Ovary (tissue), 10 donors: ENCODE measurements at regions of chr2 and their contacts with region 1.

Region 1: DNA sequence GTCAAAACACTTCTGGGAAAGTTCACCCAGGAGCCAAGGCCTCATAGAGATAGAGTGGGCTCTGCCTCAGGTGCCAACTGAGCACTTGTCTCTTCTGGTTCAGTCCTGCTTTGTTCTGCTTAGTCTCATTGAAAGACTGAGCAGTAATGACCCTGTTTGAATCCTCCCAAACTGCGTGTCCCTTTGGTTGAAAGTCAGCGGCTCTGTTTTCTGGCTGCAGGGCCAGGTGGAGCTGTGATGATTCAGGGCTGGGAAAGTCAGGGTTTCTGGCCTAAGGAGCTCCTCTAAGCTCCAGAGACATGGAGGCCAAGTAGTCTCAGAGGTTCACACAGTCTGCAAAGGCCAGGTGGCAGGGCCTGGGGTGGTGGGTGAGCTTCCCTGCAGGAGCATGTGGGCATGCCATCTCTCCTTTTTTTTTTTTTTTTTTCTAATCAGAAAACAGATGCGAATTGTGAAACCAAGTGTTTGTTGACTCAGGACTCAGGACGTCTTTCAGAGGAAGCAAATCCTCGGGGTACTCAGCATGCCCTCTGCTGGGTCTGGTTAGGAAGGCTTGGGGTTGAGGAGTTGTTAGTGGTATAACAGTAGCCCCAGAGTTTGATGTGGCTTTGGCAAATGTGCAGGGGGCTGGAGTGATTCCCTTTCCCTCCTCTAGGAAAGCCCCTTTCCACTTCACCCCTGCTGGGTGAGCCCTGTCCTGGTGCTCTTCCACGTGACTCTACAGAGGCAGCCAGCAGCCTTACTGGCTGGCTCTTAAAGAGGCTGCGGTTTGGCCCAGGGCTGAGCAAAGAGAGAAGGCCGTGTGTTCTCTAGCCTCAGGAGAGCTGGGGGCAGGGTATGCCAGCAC is 38.3 kb downstream of the TMEM17 start:
- DNase-seq: peak in 1 of 5 donors; percentile 46
- H3K4me3 ChIP-seq: no peak overlapping the region
- H3K27ac ChIP-seq: peak overlapping the region in 1 of 2 donors; percentile 11
- H3K4me1 ChIP-seq: peaks cover 28% of the 10 kb centered on the region
- H3K27me3 ChIP-seq: no peaks in the 10 kb centered on the region
- CTCF ChIP-seq: no peak
- EP300 ChIP-seq: no peak
- POLR2A ChIP-seq: no peak

Region 2: DNA sequence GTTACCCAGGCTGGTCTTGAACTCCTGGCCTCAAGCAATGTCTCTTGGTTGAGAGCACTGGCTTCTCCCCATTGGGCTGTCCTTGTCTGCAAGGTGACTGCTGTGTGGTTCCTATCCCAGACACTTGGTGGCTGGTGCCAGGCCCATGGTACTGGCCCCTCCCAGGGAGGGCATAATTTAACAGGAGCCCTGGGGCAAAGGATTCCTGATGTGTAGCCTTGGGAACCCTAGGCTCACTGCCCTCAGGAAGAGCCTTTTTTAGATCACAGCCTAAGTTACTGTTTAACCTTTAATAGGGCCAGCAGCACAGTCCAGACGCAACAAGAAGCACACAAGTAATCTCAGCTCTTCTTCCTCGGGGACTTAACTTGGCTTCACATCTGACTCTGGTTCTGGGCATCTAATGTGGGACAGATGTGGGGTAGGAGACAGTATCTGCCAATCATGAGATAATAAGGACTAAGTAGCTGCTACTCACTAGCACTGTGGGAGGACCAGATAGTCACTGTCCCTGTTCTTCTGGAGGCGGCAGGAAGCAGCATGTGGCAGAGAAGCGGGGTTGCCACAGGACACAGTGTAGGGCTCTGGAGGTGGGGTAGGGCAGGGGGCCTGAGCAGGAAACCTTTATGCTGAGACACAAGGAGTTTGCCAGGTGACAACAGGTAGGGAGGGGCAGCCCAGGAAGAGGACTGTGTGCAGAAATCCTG is 98.0 kb before region 1 on chr2:
- intact Hi-C with region 1: no loop called
- DNase-seq: no peak
- H3K4me3 ChIP-seq: no peak overlapping the region
- H3K27ac ChIP-seq: no peak overlapping the region
- H3K4me1 ChIP-seq: no peaks in the 10 kb centered on the region
- H3K27me3 ChIP-seq: no peaks in the 10 kb centered on the region
- CTCF ChIP-seq: no peak
- EP300 ChIP-seq: no peak
- POLR2A ChIP-seq: no peak

Region 3: DNA sequence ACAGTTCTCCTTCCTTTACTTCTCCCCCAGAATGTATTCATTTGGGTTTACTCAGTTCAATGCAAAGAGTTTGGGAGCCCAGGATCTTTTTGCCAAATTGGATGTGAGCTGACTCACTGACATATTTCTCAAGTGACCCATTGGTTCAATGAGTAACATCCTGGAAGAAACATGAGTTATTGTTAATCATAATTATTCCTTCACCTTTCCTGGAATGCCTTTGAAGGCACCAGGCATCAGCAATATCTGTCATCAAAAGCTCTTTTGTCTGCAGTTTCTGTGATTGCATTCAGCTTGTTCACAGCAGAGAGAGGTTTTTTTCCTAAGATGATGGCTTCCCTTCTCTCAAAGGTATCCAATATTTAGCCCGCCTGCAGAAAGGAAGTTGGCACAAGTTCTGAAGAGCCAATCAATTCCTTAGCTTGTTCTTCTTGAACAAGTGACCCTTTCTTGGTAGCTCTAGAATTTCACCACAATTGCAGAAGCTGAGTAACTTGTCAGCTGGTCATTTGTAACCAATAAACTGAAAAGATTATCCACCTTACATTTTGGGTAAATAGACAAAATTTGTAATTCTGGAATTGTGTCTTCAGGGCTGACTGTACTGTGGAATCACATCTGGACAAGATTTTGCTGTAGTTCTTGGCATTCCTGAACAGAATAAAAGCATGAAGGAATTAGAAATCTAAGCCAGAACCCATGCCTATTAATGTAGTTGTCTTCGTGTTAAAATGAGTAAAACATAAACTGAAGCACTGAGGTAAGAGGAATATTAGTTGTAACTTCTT is 110.5 kb after region 1 on chr2:
- intact Hi-C with region 1: loop called in 1 of 4 experiments (anchors 10 kb)
- DNase-seq: no peak
- H3K4me3 ChIP-seq: no peak overlapping the region
- H3K27ac ChIP-seq: no peak overlapping the region
- H3K4me1 ChIP-seq: peaks cover 2% of the 10 kb centered on the region
- H3K27me3 ChIP-seq: no peaks in the 10 kb centered on the region
- CTCF ChIP-seq: no peak
- EP300 ChIP-seq: no peak
- POLR2A ChIP-seq: no peak

Region 4: GRCh38 chr2:62627667-62628066 is 160.0 kb after region 1 on chr2:
- intact Hi-C with region 1: no loop called
- DNase-seq: no peak
- H3K4me3 ChIP-seq: no peak overlapping the region
- H3K27ac ChIP-seq: no peak overlapping the region
- H3K4me1 ChIP-seq: no peaks in the 10 kb centered on the region
- H3K27me3 ChIP-seq: no peaks in the 10 kb centered on the region
- CTCF ChIP-seq: no peak
- EP300 ChIP-seq: no peak
- POLR2A ChIP-seq: no peak

Region 5: GRCh38 chr2:62657783-62658182 is 190.1 kb after region 1 on chr2:
- intact Hi-C with region 1: loop called in 1 of 4 experiments (anchors 5 kb)
- DNase-seq: no peak
- H3K4me3 ChIP-seq: no peak overlapping the region
- H3K27ac ChIP-seq: no peak overlapping the region
- H3K4me1 ChIP-seq: peaks cover 7% of the 10 kb centered on the region
- H3K27me3 ChIP-seq: no peaks in the 10 kb centered on the region
- CTCF ChIP-seq: no peak
- EP300 ChIP-seq: no peak
- POLR2A ChIP-seq: no peak

Region 6: DNA sequence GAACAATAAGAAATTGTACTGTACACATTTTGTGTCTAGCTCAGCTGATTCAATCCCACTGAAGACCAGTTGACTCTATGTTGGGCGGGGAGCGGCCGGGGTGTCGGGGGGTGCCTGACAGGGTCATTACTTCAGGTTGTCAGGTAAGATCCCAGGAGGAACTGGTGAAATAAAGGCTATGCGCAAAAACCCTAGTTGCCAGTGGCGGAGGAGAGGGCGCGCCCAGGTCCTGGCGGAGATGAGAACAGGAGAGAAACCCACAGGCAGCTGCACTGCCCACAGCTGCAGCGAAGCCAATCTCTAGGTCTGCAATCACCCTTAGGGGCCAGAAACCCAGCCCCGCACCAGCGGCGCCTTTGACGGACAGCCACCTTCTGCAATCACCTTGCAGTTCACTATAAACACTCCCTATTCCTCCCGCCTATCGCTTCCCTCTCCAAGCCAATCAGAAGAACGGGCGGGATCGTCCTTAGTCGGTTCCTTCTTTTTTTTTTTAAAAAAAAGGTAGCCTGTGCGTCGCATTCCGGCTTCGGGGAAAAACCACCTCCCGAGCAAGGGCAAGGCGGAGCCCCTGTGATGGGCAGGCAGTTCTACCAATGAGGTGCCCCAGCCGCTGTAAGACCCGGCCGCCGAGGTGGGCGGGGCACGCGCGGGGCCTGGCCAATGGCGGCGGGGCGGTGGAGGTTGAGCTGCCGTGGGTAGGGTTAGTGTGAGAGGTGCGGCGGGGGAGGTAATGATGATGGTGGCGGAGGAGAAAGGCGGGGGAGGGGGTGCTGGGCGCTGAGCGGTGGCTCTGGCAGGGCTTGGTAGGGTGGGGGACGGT is 237.5 kb after region 1 on chr2 and contains the start of gene EHBP1:
- intact Hi-C with region 1: loop called in 1 of 4 experiments (anchors 5 kb)
- DNase-seq: peak; percentile 99 to 100 (median 100)
- H3K4me3 ChIP-seq: peak within 1 kb of the TSS; percentile 98
- H3K27ac ChIP-seq: peak within 1 kb of the TSS; percentile 93 to 97
- H3K4me1 ChIP-seq: peaks cover 6% of the 10 kb centered on the region
- H3K27me3 ChIP-seq: no peaks in the 10 kb centered on the region
- CTCF ChIP-seq: no peak
- EP300 ChIP-seq: peak; percentile 47
- POLR2A ChIP-seq: peak; percentile 60
- total RNA-seq, gene EHBP1: 56.3 to 185 (median 138) TPM